Activated B cell treated with CpG ODN at 0.5 μM for 24 hours (primary cell): ENCODE measurements at regions of chr2 and their contacts with region 1.

Region 1: GRCh38 chr2:227460070-227460485 is 11.9 kb upstream of the AGFG1 start:
- DNase-seq: peak; percentile 53
- ATAC-seq: peak; percentile 78
- H3K4me3 Mint-ChIP-seq: peak overlapping the region; percentile 63
- H3K27ac Mint-ChIP-seq: peak overlapping the region; percentile 79
- H3K4me1 Mint-ChIP-seq: peaks cover 76% of the 10 kb centered on the region
- H3K27me3 Mint-ChIP-seq: no peaks in the 10 kb centered on the region
- CTCF ChIP-seq: no peak

Region 2: DNA sequence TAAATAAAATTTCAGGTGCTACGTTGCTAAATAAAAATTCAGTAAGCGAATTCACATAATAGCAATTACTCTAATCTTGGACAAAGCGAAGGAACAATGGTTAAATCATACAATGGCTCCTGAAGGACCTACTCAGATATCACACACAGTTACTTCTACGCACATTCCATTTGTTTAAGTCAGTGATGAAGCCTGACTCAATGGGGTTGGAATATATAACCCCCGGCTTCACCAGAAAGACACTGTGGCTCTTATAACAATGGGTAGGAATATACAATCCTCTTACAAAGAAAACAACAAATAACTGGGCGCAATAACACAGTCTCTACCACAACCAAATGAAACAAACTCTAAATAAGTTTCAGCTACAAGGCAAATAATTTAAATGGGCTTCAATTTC is 1009.9 kb before region 1 on chr2:
- CTCF ChIA-PET with region 1: no interaction called
- POLR2A ChIA-PET with region 1: no interaction called
- intact Hi-C with region 1: no loop called
- DNase-seq: no peak
- ATAC-seq: no peak
- H3K4me3 Mint-ChIP-seq: no peak overlapping the region
- H3K27ac Mint-ChIP-seq: no peak overlapping the region
- H3K4me1 Mint-ChIP-seq: no peaks in the 10 kb centered on the region
- H3K27me3 Mint-ChIP-seq: peaks cover 8% of the 10 kb centered on the region
- CTCF ChIP-seq: no peak

Region 3: GRCh38 chr2:227324995-227325838 is 134.9 kb before region 1 on chr2 and contains the start of gene MFF:
- CTCF ChIA-PET with region 1: no interaction called
- POLR2A ChIA-PET with region 1: interaction called, 7 read pairs
- intact Hi-C with region 1: loop called (anchors 1 kb)
- DNase-seq: peak; percentile 87
- ATAC-seq: peak; percentile 98
- H3K4me3 Mint-ChIP-seq: peak within 1 kb of the TSS; percentile 95
- H3K27ac Mint-ChIP-seq: peak within 1 kb of the TSS; percentile 91
- H3K4me1 Mint-ChIP-seq: peaks cover 33% of the 10 kb centered on the region
- H3K27me3 Mint-ChIP-seq: no peaks in the 10 kb centered on the region
- CTCF ChIP-seq: no peak
- total RNA-seq, gene MFF: 66.4 and 78.9 TPM in 2 replicates

Region 4: DNA sequence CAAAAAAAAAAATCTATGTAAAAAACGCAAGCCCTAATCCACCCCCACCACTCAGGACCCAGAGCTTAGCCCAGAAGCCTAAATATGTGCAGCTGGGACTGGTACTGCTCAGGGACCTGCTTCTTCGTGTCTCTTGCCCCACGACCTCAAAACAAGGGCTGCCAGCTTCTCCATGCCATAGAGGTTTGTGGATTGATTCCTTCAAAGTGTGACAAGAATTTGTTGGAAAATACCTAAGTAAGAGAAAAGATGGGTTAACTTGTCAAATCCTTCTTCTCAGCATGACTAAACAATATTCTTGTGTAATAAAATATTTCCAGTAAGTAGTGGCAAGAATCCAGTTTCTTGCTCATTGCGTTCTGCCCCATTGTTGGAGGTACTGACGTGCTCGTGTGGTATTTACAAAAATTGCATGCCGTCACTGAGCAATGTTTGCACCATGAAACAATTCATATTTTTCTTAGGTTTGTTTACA is 71.5 kb before region 1 on chr2:
- CTCF ChIA-PET with region 1: no interaction called
- POLR2A ChIA-PET with region 1: interaction called, 9 read pairs
- intact Hi-C with region 1: loop called (anchors 1 kb)
- DNase-seq: no peak
- ATAC-seq: no peak
- H3K4me3 Mint-ChIP-seq: no peak overlapping the region
- H3K27ac Mint-ChIP-seq: no peak overlapping the region
- H3K4me1 Mint-ChIP-seq: peaks cover 45% of the 10 kb centered on the region
- H3K27me3 Mint-ChIP-seq: no peaks in the 10 kb centered on the region
- CTCF ChIP-seq: no peak

Region 5: DNA sequence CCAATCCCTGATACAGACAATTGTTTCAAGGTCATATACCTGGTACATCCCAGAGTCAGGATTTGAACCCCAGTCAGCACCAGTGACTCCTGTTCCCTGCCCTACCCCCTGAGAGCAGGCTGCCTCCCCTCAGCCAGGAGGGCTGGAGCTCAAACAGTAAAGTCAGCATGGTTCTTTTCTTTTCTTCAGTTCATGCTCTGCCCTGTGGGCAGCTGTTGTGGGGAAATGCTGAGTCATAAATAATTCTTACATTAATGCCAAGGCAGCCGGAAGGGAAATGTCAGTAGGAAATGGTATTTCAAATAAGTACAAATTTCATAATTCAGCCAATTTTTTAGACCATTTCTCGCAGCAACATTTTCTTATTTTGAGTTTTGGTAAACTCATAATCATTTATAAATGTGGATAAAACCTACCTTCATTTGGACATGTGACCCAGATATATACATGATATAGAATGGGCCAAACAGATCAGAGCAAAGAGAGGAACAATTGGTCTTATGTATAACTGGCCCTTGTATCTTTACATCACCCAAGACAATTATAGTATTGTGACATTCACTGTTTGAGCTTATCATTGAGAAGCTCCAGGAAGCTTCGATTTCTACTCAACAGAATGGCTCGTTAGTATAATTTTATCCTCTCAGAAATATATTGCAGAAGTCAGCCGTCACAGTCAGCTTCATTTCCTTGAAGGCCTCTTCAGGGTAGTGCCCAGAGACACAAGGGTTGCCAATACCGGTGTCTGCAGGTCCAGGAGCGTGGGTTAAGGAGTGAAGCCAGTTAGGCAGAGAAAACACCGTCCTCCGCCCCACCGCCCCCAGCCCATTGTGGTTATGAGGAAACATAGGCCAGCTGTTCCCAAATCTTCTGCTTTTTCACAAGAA is 44.3 kb before region 1 on chr2:
- CTCF ChIA-PET with region 1: interaction called, 4 read pairs
- POLR2A ChIA-PET with region 1: interaction called, 4 read pairs
- intact Hi-C with region 1: loop called (anchors 1 kb)
- DNase-seq: no peak
- ATAC-seq: peak; percentile 41
- H3K4me3 Mint-ChIP-seq: no peak overlapping the region
- H3K27ac Mint-ChIP-seq: peak overlapping the region; percentile 69
- H3K4me1 Mint-ChIP-seq: peaks cover 47% of the 10 kb centered on the region
- H3K27me3 Mint-ChIP-seq: no peaks in the 10 kb centered on the region
- CTCF ChIP-seq: no peak